ENCODE measurements at regions of chr10 and their contacts with region 1.

Region 1: GRCh38 chr10:70052462-70053217 is at the start of gene MACROH2A2:
- DNase-seq: peak; percentile 72
- H3K4me3 ChIP-seq: peak within 1 kb of the TSS; percentile 70 to 96 (median 81)
- H3K27ac ChIP-seq: peak within 1 kb of the TSS; percentile 61
- H3K4me1 ChIP-seq: no peaks in the 10 kb centered on the region
- H3K27me3 ChIP-seq: no peaks in the 10 kb centered on the region
- CTCF ChIP-seq: peak; percentile 19 to 57
- total RNA-seq, gene MACROH2A2: 17.8 to 32.6 TPM

Region 2: GRCh38 chr10:69968830-69969229 is 83.8 kb before region 1 on chr10:
- CTCF ChIA-PET with region 1: no interaction called
- dilution Hi-C with region 1: no loop called
- in situ Hi-C with region 1: no loop called
- intact Hi-C with region 1: loop called (anchors 1 kb)
- DNase-seq: peak; percentile 32
- H3K4me3 ChIP-seq: no peak overlapping the region
- H3K27ac ChIP-seq: no peak overlapping the region
- H3K4me1 ChIP-seq: peaks cover 4% of the 10 kb centered on the region
- H3K27me3 ChIP-seq: peaks cover 3% of the 10 kb centered on the region
- CTCF ChIP-seq: peak; percentile 29 to 60

Measured in mammary epithelial cell (primary cell).